Naive thymus-derived CD4-positive, alpha-beta T cell (primary cell): ENCODE measurements at regions of chr6 and their contacts with region 1.

Region 1: GRCh38 chr6:70667711-70668498 is at the start of gene SMAP1:
- DNase-seq: peak; percentile 84 to 96 (median 90)
- ATAC-seq: peak; percentile 97
- H3K4me3 ChIP-seq: peak within 1 kb of the TSS; percentile 69
- H3K4me3 Mint-ChIP-seq: peak within 1 kb of the TSS; percentile 83 to 96 (median 90)
- H3K27ac ChIP-seq: peak within 1 kb of the TSS; percentile 82
- H3K27ac Mint-ChIP-seq: peak within 1 kb of the TSS; percentile 92 to 98 (median 95)
- H3K4me1 ChIP-seq: peaks cover 23 to 26% of the 10 kb centered on the region in 2 donors
- H3K4me1 Mint-ChIP-seq: peaks cover 40 to 58% (median 55%) of the 10 kb centered on the region in 7 donors
- H3K27me3 ChIP-seq: no peaks in the 10 kb centered on the region
- H3K27me3 Mint-ChIP-seq: no peaks in the 10 kb centered on the region
- total RNA-seq, gene SMAP1: 18.7 to 45.7 (median 20.8) TPM

Region 2: DNA sequence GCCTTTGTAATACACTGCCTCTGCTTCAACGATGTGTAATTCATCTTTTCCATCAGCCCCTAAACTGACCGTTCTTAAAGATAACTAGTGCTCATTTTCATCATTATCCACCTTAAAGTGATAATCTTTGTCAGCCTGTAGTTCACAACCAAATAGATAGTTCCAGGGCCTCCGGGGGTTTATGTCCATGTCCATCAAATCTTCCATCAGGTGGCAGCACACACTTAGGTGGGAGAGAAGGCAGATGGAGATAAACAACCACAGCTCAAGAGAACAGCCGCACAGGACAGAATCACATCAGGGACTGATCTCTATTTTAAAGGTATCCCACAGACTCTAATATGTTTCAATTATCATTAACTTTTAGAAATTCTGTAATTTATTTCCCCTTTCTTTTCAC is 962.0 kb before region 1 on chr6:
- CTCF ChIA-PET with region 1: no interaction called
- POLR2A ChIA-PET with region 1: no interaction called
- intact Hi-C with region 1: no loop called
- DNase-seq: no peak
- ATAC-seq: no peak
- H3K4me3 ChIP-seq: no peak overlapping the region
- H3K4me3 Mint-ChIP-seq: no peak overlapping the region
- H3K27ac ChIP-seq: no peak overlapping the region
- H3K27ac Mint-ChIP-seq: peak overlapping the region in 1 of 9 donors; percentile 52
- H3K4me1 ChIP-seq: no peaks in the 10 kb centered on the region
- H3K4me1 Mint-ChIP-seq: peaks cover 0 to 8% (median 3%) of the 10 kb centered on the region in 7 donors
- H3K27me3 ChIP-seq: no peaks in the 10 kb centered on the region
- H3K27me3 Mint-ChIP-seq: no peaks in the 10 kb centered on the region

Region 3: DNA sequence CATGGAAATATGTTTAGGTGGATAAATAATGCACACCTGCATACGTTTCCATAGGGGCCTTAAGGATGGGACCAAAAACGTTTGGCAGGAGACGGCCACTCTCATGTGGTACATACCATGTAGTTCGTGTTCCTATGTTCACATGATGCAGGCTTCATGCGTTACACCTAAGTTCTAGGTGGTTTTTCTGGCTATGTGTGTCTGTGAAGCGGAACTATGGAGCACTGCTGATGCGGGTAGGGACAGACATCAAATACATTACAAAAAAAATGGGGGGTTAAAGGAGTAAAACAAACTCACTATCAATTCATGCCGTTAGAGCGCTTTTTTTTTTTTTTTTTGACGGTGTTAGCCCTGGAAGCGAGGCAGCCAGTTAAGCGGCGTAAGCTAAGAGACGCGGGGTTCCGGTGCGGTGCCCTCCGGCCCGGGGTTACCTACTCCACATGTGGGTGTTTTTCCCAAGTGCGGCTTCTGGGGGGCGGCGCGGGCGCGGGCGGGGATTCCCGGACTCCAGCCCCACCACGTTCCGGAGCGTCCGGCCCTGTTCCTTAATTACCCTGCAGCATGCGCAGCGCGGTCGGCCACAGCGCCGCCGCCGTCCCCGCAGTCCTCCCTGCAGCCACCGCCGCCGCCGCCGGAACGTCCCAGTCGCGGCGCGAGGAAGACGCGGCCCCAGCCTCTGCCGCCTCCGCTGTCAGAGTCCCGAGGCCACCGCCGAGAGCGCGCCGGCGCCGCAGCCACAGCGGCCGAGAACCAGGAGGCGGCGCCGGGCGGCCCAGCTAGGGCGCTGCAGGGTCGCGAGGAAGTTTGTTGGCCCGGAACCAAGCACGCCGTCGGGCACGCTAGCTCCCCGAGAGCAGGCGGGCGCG is 800.9 kb before region 1 on chr6:
- CTCF ChIA-PET with region 1: no interaction called
- POLR2A ChIA-PET with region 1: no interaction called
- intact Hi-C with region 1: loop called in 1 of 2 experiments (anchors 5 kb)
- DNase-seq: peak; percentile 42 to 64 (median 55)
- ATAC-seq: peak; percentile 84
- H3K4me3 ChIP-seq: peak overlapping the region; percentile 55
- H3K4me3 Mint-ChIP-seq: peak overlapping the region; percentile 79 to 98 (median 89)
- H3K27ac ChIP-seq: peak overlapping the region; percentile 4
- H3K27ac Mint-ChIP-seq: peak overlapping the region in 7 of 9 donors; percentile 15 to 85 (median 51)
- H3K4me1 ChIP-seq: peaks cover 5 to 6% of the 10 kb centered on the region in 2 donors
- H3K4me1 Mint-ChIP-seq: peaks cover 15 to 24% (median 20%) of the 10 kb centered on the region in 7 donors
- H3K27me3 ChIP-seq: no peaks in the 10 kb centered on the region
- H3K27me3 Mint-ChIP-seq: peaks cover 8 to 66% (median 34%) of the 10 kb centered on the region in 5 donors

Region 4: GRCh38 chr6:70459235-70459634 is 208.7 kb before region 1 on chr6:
- CTCF ChIA-PET with region 1: no interaction called
- POLR2A ChIA-PET with region 1: no interaction called
- intact Hi-C with region 1: no loop called
- DNase-seq: no peak
- ATAC-seq: no peak
- H3K4me3 ChIP-seq: no peak overlapping the region
- H3K4me3 Mint-ChIP-seq: no peak overlapping the region
- H3K27ac ChIP-seq: no peak overlapping the region
- H3K27ac Mint-ChIP-seq: no peak overlapping the region
- H3K4me1 ChIP-seq: no peaks in the 10 kb centered on the region
- H3K4me1 Mint-ChIP-seq: no peaks in the 10 kb centered on the region
- H3K27me3 ChIP-seq: no peaks in the 10 kb centered on the region
- H3K27me3 Mint-ChIP-seq: no peaks in the 10 kb centered on the region

Region 5: GRCh38 chr6:70651326-70651905 is 16.5 kb before region 1 on chr6:
- CTCF ChIA-PET with region 1: no interaction called
- POLR2A ChIA-PET with region 1: interaction called, 21 read pairs
- intact Hi-C with region 1: loop called (anchors 1 to 2 kb)
- DNase-seq: peak in 8 of 9 donors; percentile 24 to 68 (median 58)
- ATAC-seq: peak; percentile 82
- H3K4me3 ChIP-seq: peak overlapping the region; percentile 18
- H3K4me3 Mint-ChIP-seq: peak overlapping the region; percentile 25 to 75 (median 58)
- H3K27ac ChIP-seq: peak overlapping the region; percentile 6
- H3K27ac Mint-ChIP-seq: peak overlapping the region; percentile 32 to 84 (median 76)
- H3K4me1 ChIP-seq: peaks cover 21 to 22% of the 10 kb centered on the region in 2 donors
- H3K4me1 Mint-ChIP-seq: peaks cover 13 to 52% (median 25%) of the 10 kb centered on the region in 7 donors
- H3K27me3 ChIP-seq: no peaks in the 10 kb centered on the region
- H3K27me3 Mint-ChIP-seq: no peaks in the 10 kb centered on the region

Region 6: GRCh38 chr6:70657706-70658105 is 10.2 kb before region 1 on chr6:
- CTCF ChIA-PET with region 1: no interaction called
- POLR2A ChIA-PET with region 1: interaction called, 21 read pairs
- intact Hi-C with region 1: no loop called
- DNase-seq: no peak
- ATAC-seq: no peak
- H3K4me3 ChIP-seq: no peak overlapping the region
- H3K4me3 Mint-ChIP-seq: no peak overlapping the region
- H3K27ac ChIP-seq: no peak overlapping the region
- H3K27ac Mint-ChIP-seq: no peak overlapping the region
- H3K4me1 ChIP-seq: no peaks in the 10 kb centered on the region
- H3K4me1 Mint-ChIP-seq: peaks cover 0 to 14% (median 0%) of the 10 kb centered on the region in 7 donors
- H3K27me3 ChIP-seq: no peaks in the 10 kb centered on the region
- H3K27me3 Mint-ChIP-seq: peaks cover 0 to 18% (median 10%) of the 10 kb centered on the region in 5 donors